CD4-positive, alpha-beta T cell (primary cell): ENCODE measurements at regions of chr22 and their contacts with region 1.

Region 1: DNA sequence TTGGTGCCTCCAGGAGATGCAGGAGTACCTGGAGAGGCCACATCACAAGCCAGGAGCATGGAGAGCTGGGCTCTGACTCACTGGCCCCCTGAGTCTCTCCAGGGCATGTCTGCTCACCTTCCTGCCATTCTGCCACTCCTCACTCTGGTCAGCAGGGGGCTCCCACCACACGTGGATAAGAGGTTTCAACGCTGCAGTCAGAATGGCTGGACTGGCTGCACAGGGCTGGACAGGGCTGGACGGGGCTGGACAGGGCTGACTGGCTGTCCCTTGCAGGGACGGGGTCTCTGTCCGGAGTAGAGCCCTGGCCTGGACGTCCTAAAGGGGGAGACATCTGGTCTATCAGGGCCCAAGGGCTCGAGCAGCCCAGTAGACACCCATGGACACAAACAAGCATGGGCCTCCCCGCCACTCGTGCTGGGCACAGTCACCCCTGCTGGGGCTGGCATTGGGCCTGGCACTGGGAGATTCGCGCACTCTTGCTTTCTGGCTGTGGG is 34.6 kb downstream of the CYTH4 start:
- DNase-seq: peak; percentile 45 to 86 (median 67)
- ATAC-seq: peak; percentile 82
- H3K4me3 ChIP-seq: no peak overlapping the region
- H3K4me3 Mint-ChIP-seq: no peak overlapping the region
- H3K27ac ChIP-seq: no peak overlapping the region
- H3K27ac Mint-ChIP-seq: peak overlapping the region; percentile 33
- H3K4me1 ChIP-seq: peaks cover 52% of the 10 kb centered on the region
- H3K4me1 Mint-ChIP-seq: peaks cover 39% of the 10 kb centered on the region
- H3K27me3 ChIP-seq: no peaks in the 10 kb centered on the region
- H3K27me3 Mint-ChIP-seq: no peaks in the 10 kb centered on the region
- CTCF ChIP-seq: peak; percentile 92

Region 2: DNA sequence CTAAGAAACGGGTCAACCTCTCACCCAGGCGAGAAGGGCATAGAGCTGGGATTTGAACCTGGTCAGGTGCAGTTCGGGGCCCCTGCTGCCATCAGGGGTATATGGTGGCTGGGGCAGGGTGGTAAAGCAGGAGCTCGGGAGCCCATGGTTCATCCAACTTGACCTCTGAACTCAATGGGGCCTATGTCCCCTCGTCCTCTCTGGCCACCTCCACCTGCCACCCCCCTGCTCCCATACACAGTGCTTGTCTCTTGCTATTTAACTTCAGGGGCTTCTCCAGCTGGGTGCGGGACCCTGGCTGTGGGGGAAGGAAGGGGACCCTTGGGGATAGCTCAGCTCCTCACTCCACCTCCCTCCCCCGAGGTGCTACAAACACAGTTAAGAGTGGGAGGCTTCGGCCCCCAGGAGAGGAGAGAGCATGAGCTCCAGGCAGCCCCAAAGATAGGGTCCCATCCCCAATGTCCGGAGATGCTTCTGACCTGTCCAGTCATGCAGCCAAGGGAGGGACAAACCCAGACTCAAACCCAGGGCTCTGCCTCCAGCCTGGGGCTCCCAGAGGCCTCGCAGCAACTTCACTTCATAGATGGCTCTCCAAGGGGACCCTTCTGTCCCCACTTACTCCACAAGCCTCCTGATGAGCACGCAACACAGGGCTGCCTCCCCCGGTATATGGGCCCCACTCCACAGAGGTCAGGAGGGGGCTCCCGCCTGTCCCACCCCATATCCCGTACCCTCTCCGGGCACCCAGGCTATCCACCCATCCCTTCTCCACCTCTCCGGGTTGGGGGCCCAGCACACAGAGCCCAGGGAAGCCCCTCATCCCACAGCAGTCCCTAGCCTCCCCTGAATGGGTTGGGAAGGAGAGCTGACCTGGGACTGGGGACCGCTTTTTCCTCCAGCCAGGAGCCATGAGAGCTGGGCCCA is 167.9 kb before region 1 on chr22:
- CTCF ChIA-PET with region 1: no interaction called
- POLR2A ChIA-PET with region 1: no interaction called
- intact Hi-C with region 1: no loop called
- DNase-seq: peak in 1 of 14 experiments; percentile 35
- ATAC-seq: no peak
- H3K4me3 ChIP-seq: peak overlapping the region; percentile 78
- H3K4me3 Mint-ChIP-seq: peak overlapping the region; percentile 93
- H3K27ac ChIP-seq: peak overlapping the region; percentile 61 to 82
- H3K27ac Mint-ChIP-seq: peak overlapping the region; percentile 97
- H3K4me1 ChIP-seq: peaks cover 63% of the 10 kb centered on the region
- H3K4me1 Mint-ChIP-seq: peaks cover 76% of the 10 kb centered on the region
- H3K27me3 ChIP-seq: no peaks in the 10 kb centered on the region
- H3K27me3 Mint-ChIP-seq: no peaks in the 10 kb centered on the region
- CTCF ChIP-seq: no peak

Region 3: DNA sequence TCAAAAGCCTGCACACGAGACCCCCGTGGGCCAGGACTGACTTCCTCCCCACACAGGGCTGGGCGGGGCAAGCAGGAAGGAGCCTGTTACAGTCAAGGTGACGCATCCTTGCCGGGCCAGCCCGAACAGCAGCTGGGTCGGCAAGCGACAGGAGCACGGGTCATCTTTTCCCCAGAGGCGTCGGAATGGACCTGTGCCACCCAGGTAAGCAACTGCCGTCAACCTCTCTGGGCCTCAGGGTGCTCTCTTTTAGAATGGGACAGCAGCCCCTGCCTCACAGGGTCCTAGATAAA is 34.6 kb before region 1 on chr22 and contains the start of gene CYTH4:
- CTCF ChIA-PET with region 1: interaction called, 4 read pairs
- POLR2A ChIA-PET with region 1: interaction called, 35 read pairs
- intact Hi-C with region 1: no loop called
- DNase-seq: peak; percentile 36 to 87 (median 76)
- ATAC-seq: peak; percentile 86
- H3K4me3 ChIP-seq: peak within 1 kb of the TSS; percentile 99
- H3K4me3 Mint-ChIP-seq: peak within 1 kb of the TSS; percentile 97
- H3K27ac ChIP-seq: peak within 1 kb of the TSS; percentile 78 to 90
- H3K27ac Mint-ChIP-seq: peak within 1 kb of the TSS; percentile 96
- H3K4me1 ChIP-seq: peaks cover 50% of the 10 kb centered on the region
- H3K4me1 Mint-ChIP-seq: peaks cover 61% of the 10 kb centered on the region
- H3K27me3 ChIP-seq: no peaks in the 10 kb centered on the region
- H3K27me3 Mint-ChIP-seq: no peaks in the 10 kb centered on the region
- CTCF ChIP-seq: no peak
- total RNA-seq, gene CYTH4: 134 to 138 TPM

Region 4: GRCh38 chr22:37428649-37429586 is 112.0 kb after region 1 on chr22:
- CTCF ChIA-PET with region 1: interaction called, 5 read pairs
- POLR2A ChIA-PET with region 1: no interaction called
- intact Hi-C with region 1: loop called (anchors 1 kb)
- DNase-seq: peak; percentile 35 to 83 (median 55)
- ATAC-seq: peak; percentile 62
- H3K4me3 ChIP-seq: no peak overlapping the region
- H3K4me3 Mint-ChIP-seq: peak overlapping the region; percentile 38
- H3K27ac ChIP-seq: no peak overlapping the region
- H3K27ac Mint-ChIP-seq: no peak overlapping the region
- H3K4me1 ChIP-seq: peaks cover 24% of the 10 kb centered on the region
- H3K4me1 Mint-ChIP-seq: no peaks in the 10 kb centered on the region
- H3K27me3 ChIP-seq: peaks cover 43 to 47% of the 10 kb centered on the region in 2 experiments
- H3K27me3 Mint-ChIP-seq: peaks cover 83% of the 10 kb centered on the region
- CTCF ChIP-seq: peak; percentile 74

Region 5: DNA sequence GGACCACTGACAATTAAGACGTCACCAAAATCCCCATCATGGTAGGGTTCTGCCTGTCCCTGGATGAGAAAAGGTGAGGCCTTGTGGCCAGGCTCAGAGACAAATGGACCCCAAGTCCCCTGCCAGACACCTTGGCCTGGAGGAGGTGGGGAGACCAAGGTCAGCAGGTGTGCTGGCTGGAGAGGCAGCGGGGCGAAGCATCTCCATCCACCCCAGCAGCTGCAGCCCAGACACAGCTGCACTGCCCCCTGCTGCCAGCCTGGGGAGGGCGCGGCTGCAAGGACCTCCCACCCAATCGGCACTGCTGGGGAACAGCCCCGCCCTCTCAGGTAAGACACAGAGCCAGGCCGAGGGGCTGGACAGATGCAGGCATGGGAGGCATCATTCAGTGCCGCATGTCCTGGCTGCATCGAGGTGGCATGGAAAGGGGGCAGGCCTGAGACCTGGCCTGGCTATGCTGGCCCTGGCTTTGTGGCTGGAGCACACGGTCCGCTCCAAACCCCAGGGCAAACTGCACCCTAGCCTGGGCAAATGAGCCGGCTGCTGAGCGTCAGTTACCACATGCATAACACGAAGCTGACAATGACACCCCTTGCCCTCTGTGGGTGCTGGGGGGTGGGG is 181.5 kb after region 1 on chr22:
- CTCF ChIA-PET with region 1: interaction called, 9 read pairs
- POLR2A ChIA-PET with region 1: no interaction called
- intact Hi-C with region 1: loop called (anchors 2 kb)
- DNase-seq: peak; percentile 56 to 88 (median 72)
- ATAC-seq: peak; percentile 99
- H3K4me3 ChIP-seq: no peak overlapping the region
- H3K4me3 Mint-ChIP-seq: no peak overlapping the region
- H3K27ac ChIP-seq: no peak overlapping the region
- H3K27ac Mint-ChIP-seq: no peak overlapping the region
- H3K4me1 ChIP-seq: peaks cover 30% of the 10 kb centered on the region
- H3K4me1 Mint-ChIP-seq: peaks cover 28% of the 10 kb centered on the region
- H3K27me3 ChIP-seq: no peaks in the 10 kb centered on the region
- H3K27me3 Mint-ChIP-seq: no peaks in the 10 kb centered on the region
- CTCF ChIP-seq: peak; percentile 76